Endothelial cell of umbilical vein (primary cell): ENCODE measurements at regions of chr1 and their contacts with region 1.

Region 1: DNA sequence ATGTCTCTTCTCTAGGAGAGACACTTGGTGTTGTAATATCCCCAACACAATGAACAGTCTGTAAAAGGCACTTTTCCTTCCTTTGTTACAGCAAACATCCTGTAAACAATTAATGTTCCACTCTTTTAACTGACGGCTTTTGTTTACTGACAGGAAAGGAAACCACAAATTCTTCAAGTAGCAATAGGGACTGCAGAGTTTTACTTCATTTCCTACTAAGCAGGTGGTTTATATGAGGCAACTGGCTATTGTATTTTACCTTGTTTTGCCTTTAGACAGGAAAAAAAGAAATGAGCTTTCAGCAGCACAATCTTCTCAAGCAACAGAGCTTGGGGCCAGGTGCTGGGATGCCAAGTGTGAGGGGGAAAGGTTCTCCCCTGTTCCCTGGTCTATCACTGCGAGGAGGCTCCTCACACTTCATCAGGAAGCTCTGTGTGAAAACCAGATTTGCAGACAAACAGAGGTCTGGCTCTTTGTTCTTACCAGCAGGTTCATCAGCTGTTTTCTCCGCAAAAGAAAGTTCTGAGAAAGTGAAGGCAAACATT is 51.2 kb downstream of the SIPA1L2 start:
- DNase-seq: peak; percentile 65
- H3K4me3 ChIP-seq: no peak overlapping the region
- H3K27ac ChIP-seq: peak overlapping the region; percentile 57
- H3K4me1 ChIP-seq: peaks cover 21% of the 10 kb centered on the region
- H3K27me3 ChIP-seq: no peaks in the 10 kb centered on the region
- CTCF ChIP-seq: no peak
- POLR2A ChIP-seq: no peak

Region 2: DNA sequence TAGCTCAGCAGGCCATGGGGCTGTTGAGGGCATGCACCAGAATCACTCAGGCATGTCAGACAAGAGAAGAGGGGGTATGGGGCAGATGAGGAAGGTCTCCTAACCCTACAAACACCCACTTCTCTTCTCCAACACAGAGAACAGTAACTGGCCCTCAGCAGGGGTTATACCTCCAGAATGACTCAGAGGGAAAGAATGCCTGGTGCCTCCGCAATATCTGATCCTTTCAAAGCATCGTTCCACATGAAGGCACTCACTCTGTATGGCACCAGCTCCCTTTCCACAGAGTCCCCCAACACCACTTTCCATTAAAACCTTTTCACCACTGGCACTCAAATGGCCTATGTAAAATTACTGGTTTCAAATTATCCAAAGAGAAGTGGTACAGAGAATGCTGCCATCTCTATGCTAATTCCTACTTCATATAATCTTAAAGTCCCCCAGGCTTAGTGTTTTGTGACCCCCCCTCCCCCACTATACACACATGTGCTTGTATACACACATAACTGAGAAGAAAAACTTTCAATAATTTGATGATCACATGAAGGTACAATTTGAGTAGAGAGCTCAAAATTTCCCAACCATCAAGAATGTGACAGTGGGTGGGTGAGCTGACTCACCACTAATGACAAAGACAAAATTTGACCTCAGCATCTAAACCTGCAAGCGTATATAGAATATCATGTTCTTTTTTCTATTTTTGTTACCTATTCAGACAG is 40.3 kb before region 1 on chr1:
- CTCF ChIA-PET with region 1: no interaction called
- POLR2A ChIA-PET with region 1: no interaction called
- dilution Hi-C with region 1: no loop called
- intact Hi-C with region 1: no loop called
- DNase-seq: no peak
- H3K4me3 ChIP-seq: no peak overlapping the region
- H3K27ac ChIP-seq: no peak overlapping the region
- H3K4me1 ChIP-seq: no peaks in the 10 kb centered on the region
- H3K27me3 ChIP-seq: no peaks in the 10 kb centered on the region
- CTCF ChIP-seq: no peak
- POLR2A ChIP-seq: no peak

Region 3: DNA sequence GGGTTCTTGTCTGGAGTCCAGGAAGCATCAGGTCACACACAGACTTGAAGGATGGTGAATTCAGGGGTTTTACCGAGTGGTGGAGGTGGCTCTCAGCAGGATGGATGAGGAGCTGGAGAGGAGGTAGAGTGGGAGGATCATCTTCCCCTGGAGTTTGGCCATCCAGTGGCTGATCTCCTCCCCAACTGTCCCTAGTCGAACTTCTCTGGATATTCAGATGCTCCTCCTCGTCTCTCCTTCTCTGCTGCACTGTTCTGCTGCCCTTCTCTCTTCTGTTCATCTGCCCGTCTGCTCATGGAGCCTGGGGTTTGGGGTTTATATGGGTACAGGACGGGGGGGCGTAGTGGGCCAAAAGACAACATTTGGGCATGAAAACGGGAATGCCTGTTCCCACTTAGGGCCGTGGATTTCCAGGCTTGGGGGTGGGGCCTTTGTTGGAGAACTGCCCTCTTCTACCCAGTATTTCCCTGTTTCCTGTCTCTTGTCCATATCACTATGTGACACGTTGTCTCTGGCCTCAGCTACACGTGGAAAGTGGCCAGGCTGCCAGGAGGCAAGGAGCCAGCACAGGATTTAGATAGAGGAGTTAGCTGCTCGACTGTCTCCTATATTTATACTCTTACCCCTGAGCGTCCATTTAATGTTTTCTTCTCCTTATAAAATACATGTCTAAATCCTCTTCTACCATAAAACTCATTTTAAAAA is 25.5 kb before region 1 on chr1:
- CTCF ChIA-PET with region 1: interaction called, 6 read pairs
- POLR2A ChIA-PET with region 1: no interaction called
- dilution Hi-C with region 1: no loop called
- intact Hi-C with region 1: loop called (anchors 1 kb)
- DNase-seq: peak; percentile 89
- H3K4me3 ChIP-seq: no peak overlapping the region
- H3K27ac ChIP-seq: no peak overlapping the region
- H3K4me1 ChIP-seq: peaks cover 12% of the 10 kb centered on the region
- H3K27me3 ChIP-seq: no peaks in the 10 kb centered on the region
- CTCF ChIP-seq: no peak
- POLR2A ChIP-seq: no peak

Region 4: DNA sequence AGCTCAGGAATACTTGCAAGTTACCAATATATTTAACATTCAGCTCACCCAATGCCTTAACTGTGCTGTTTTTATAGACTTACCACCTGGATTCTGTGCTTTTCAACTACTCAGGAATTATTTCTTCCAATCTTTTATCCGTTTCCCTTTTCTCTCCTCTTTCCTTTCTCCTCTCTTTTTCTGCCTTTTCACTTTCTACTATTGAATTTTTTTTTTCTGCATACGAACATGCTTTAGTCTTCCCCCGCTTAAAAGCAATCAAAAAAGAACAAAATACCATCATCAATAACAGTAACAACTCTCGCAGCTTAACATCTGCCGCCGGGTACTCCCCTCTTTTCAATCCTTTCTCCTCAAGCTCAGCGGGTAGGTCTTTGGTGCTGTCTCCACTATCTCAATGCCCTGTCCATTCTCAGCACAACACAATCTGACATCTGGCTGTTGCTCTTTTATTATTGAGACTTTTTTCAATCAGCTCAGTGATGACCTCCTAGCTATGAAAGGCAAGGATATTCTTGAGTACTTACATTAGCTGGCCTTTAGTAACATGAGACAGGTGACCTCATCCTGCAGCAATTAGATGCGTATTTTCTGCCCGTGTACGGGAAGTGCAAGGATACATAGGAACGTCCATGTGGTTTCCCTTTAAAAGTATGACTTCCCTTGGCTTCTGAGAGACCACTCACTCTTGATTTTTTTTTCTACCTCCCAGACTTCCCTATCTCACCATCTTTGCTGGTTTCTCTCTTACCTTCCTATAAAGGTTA is 91.4 kb after region 1 on chr1:
- CTCF ChIA-PET with region 1: no interaction called
- POLR2A ChIA-PET with region 1: no interaction called
- dilution Hi-C with region 1: no loop called
- intact Hi-C with region 1: no loop called
- DNase-seq: peak; percentile 26
- H3K4me3 ChIP-seq: no peak overlapping the region
- H3K27ac ChIP-seq: no peak overlapping the region
- H3K4me1 ChIP-seq: peaks cover 9% of the 10 kb centered on the region
- H3K27me3 ChIP-seq: no peaks in the 10 kb centered on the region
- CTCF ChIP-seq: no peak
- POLR2A ChIP-seq: no peak